K562 (cell line): ENCODE measurements at regions of chr11 and their contacts with region 1.

Region 1: GRCh38 chr11:36149538-36150242 is 139.5 kb downstream of the COMMD9 start:
- DNase-seq: peak; percentile 84 to 90 (median 88)
- ATAC-seq: peak; percentile 98
- H3K4me3 ChIP-seq: no peak overlapping the region
- H3K27ac ChIP-seq: peak overlapping the region; percentile 82; the same call in 2 of the 3 replicates
- H3K4me1 ChIP-seq: peaks cover 12 to 18% of the 10 kb centered on the region in 2 experiments
- H3K27me3 ChIP-seq: no peaks in the 10 kb centered on the region
- CTCF ChIP-seq: peak; percentile 75 to 92 (median 88)
- EP300 ChIP-seq: peak; percentile 93
- POLR2A ChIP-seq: no peak
- RAD21 ChIP-seq: peak; percentile 88 to 94

Region 2: DNA sequence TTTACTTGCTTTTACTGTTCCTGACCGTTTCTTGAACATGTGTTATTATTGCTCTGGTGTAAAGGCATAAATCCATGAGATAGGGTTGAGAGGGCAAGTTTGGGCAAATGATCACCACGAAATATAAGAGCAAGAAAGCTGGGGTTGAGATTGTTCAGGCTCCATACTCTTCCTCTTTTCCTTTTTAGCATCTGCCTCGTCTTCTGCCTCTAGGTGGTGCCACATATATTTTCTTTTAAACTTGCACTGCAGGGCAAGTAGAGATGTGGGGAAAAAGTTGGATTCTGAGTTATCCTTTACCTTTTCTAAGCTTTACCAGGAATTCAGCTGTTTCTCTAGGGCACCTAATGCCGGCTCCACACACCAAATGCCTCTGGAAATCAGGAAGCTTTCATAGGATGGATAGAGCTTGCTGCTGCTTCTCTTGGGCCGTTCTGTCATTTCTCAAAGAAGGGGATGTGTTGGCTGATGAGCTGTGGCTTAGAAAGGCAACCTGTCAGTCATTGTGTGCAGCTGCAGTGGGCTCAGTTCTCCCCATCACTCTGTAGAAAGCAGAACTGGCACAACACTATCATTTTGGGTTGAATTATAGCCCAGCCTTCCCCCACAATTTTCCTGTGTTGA is 107.6 kb before region 1 on chr11:
- CTCF ChIA-PET with region 1: no interaction called
- POLR2A ChIA-PET with region 1: no interaction called
- in situ Hi-C with region 1: no loop called
- intact Hi-C with region 1: loop called (anchors 1 kb)
- DNase-seq: peak in 3 of 4 experiments; percentile 15 to 53 (median 30)
- ATAC-seq: peak; percentile 86
- H3K4me3 ChIP-seq: no peak overlapping the region
- H3K27ac ChIP-seq: no peak overlapping the region
- H3K4me1 ChIP-seq: no peaks in the 10 kb centered on the region
- H3K27me3 ChIP-seq: no peaks in the 10 kb centered on the region
- CTCF ChIP-seq: peak; percentile 51 to 73 (median 54); a peak in 5 of 6 replicates
- EP300 ChIP-seq: no peak
- POLR2A ChIP-seq: no peak
- RAD21 ChIP-seq: peak; percentile 82 to 85

Region 3: DNA sequence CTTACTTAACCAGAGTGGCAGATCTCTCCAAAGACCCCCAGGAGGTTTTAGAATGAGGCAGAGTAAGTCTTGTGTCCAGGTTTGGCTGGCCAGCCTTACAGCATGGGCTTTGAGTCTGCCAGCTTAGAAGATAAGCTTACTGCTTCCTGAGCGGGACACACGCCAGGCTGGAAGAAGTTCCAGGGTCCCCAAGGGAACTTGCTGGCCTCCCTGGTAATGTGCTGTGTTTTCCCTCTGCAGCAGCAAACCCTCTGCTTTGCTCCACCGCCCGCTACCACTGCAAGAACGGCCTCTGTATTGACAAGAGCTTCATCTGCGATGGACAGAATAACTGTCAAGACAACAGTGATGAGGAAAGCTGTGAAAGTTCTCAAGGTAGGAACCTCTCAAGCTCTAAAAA is 51.6 kb before region 1 on chr11:
- CTCF ChIA-PET with region 1: no interaction called
- POLR2A ChIA-PET with region 1: no interaction called
- in situ Hi-C with region 1: no loop called
- intact Hi-C with region 1: no loop called
- DNase-seq: peak in 1 of 4 experiments; percentile 23
- ATAC-seq: peak; percentile 27
- H3K4me3 ChIP-seq: no peak overlapping the region
- H3K27ac ChIP-seq: peak overlapping the region; percentile 30; the same call in 2 of the 3 replicates
- H3K4me1 ChIP-seq: peaks cover 17 to 44% of the 10 kb centered on the region in 2 experiments
- H3K27me3 ChIP-seq: no peaks in the 10 kb centered on the region
- CTCF ChIP-seq: no peak
- EP300 ChIP-seq: no peak
- POLR2A ChIP-seq: no peak
- RAD21 ChIP-seq: no peak